ENCODE measurements at regions of chr3 and their contacts with region 1.

Region 1: DNA sequence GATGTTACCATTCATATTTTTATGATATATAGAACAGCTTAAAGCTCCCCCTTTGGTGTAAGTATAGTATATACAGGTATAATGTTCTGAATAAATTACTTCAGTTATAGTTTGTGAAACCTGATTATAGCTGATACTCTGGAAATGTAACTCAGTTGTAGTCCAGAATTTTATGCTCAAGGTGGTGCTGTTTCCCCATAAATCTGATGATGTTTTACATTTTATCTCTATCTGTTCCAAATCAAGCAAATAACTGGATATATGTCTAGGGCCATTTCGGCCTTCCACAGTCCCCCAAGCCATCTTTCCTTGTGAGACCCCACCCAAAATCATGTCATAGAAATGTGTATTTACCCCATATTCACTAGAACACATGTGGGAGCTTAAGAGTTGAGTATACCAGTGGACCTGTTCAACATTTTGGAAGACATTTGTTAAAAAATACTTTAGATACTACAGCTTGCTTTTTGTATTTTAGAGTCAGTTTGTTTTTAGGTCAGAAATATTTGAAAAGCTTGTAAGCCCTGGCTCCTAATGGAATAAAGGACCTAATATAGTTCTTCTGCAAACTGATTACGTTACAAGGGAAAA is 107.1 kb downstream of the ATG7 start:
- DNase-seq: no peak
- ATAC-seq: peak; percentile 66

Region 2: GRCh38 chr3:11803977-11804892 is 424.9 kb after region 1 on chr3:
- intact Hi-C with region 1: loop called (anchors 5 kb)
- DNase-seq: peak; percentile 31
- ATAC-seq: peak; percentile 72

Measured in left ventricle myocardium superior (tissue), 1 donor.